GM10248 (cell line): ENCODE measurements at regions of chr17 and their contacts with region 1.

Region 1: DNA sequence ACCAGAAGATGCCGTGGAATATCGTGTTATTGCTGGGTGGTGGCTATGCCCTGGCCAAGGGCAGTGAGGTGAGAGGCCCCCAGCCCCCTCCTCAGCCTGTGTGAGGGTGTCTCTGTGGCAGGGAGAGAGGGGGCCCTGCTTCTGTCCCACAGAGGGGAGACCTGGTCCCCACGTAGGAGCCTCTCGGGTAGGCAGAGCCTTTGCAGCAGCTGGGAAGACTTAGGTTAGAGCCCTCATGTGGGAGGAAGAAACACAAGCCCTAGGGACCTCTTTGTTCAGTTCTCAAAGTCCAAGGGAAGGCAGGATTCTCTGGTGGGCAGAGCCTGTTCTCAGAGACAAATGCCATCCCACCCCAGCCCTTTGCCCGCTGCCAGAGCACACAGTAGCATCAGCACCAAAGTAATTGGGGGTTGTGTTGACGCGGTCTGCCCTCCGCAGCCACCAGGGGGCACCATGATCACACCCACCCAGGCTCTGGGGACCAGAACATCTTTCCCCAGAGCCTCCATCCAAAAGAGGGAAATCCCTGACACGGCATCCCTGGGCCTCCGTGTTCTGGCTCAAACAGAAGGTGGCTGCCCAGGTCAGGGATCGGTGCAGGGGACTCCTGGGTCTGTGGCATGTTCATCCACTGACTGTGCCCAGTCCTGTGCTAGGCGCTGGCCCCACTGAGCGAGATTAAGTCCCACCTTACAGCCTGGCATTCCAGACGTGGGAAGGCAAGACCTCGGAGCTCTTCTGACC is 11.5 kb upstream of the FOXN1 start:
- DNase-seq: peak; percentile 92
- CTCF ChIP-seq: peak; percentile 87

Region 2: DNA sequence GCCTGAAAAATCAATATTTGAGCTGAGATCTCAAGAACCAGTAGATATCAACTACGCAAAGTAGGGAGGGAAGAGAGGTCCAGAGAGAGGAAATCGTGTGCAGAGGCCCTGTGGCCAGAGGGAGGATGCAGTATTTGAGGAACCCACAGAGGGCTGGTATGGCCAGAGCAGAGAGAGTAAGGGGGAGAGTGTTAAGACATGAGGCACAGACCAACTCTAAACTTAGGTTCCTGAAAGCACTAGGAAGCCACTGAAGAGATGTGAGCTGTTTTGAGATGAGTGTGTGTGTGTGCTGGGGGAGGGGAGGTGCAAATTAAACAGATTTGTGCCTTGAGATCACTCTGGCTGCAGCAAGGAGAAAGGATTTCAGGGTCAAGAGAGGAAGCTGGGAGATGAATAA is 10.3 kb before region 1 on chr17:
- CTCF ChIA-PET with region 1: interaction called, 38 read pairs
- POLR2A ChIA-PET with region 1: no interaction called
- DNase-seq: peak; percentile 77
- CTCF ChIP-seq: no peak

Region 3: GRCh38 chr17:28509789-28510188 is 15.2 kb after region 1 on chr17:
- CTCF ChIA-PET with region 1: interaction called, 36 read pairs
- POLR2A ChIA-PET with region 1: no interaction called
- DNase-seq: no peak
- CTCF ChIP-seq: no peak

Region 4: GRCh38 chr17:28524476-28525368 is 30.1 kb after region 1 on chr17:
- CTCF ChIA-PET with region 1: interaction called, 260 read pairs
- POLR2A ChIA-PET with region 1: no interaction called
- DNase-seq: no peak
- CTCF ChIP-seq: no peak

Region 5: GRCh38 chr17:28532991-28533807 is 38.6 kb after region 1 on chr17:
- CTCF ChIA-PET with region 1: interaction called, 260 read pairs
- POLR2A ChIA-PET with region 1: no interaction called
- DNase-seq: no peak
- CTCF ChIP-seq: no peak